ENCODE measurements at regions of chr11 and their contacts with region 1.

Region 1: DNA sequence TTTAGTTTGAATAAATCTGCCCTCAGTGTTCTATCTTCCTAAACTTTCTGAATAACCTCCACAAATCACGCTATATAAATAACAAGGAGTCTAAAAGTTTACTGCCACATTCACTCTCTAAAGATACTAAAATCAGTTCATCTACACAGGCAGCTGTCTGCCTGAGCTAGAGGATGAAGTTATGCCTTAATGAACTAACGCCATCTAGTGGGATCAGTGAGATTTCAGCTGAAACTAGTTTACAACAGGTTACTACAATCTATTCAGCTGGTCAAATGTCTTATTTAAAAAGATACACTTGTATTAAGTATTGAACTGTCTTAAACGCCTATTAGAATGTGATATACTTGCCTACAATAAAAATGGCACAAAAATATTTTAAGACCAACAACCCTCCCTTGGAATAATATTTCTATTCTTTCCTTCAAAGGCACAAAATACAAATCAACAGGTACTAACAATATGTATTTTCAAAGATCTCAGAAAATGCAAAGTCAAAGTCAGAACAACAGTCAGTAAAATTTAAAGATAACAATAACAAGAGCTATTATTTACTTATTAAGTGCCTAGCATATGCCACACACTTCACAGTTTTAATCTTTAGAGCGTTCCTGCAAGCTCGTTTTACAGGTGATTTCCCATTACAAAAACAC is 84.1 kb downstream of the LARGE2 start:
- H3K4me3 ChIP-seq: no peak overlapping the region
- H3K27ac ChIP-seq: no peak overlapping the region
- H3K4me1 ChIP-seq: no peaks in the 10 kb centered on the region
- CTCF ChIP-seq: peak; percentile 25; the same call in 1 of the 2 replicates

Region 2: DNA sequence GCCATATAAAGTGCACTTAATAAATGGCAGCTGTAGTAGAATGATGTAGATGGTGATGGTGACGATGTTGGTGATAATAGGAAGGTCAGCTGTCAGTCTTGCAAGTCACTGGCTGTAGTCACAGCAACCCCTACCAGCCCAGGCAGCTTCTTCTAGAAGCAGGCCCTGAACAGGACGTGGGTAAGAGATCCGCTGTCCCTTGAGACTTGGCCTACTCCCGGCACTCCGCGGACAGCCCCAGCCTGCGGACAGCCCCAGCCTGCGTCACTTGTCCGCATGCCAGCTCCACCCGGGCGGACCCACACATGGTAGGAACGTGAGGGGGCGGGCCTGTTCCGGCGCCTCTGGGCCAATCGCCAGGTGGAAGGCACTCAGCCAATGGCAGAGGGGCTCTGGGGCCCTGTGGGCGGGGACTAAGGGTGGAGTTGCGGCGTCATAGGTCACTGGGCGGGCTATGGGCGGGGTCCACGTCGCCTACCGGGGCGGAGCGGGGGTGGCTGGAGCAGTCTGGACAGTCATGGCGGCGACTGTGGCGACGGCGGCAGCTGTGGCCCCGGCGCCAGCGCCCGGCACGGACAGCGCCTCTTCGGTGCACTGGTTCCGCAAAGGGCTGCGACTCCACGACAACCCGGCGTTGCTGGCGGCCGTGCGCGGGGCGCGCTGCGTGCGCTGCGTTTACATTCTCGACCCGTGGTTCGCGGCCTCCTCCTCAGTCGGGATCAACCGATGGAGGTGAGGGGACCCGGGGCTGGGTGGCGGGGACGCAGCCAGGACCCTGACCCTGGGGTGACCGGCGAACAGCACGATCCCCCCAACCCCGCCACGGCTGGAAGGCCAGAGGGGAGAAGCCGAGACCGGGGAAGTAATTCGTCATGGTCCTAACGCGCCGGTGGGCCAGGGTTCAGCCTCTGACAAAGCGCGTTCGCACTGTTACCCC is 159.3 kb before region 1 on chr11 and contains the start of gene CRY2:
- CTCF ChIA-PET with region 1: interaction called, 18 read pairs
- POLR2A ChIA-PET with region 1: no interaction called
- H3K4me3 ChIP-seq: peak within 1 kb of the TSS; percentile 96
- H3K27ac ChIP-seq: no peak within 1 kb of the TSS
- H3K4me1 ChIP-seq: no peaks in the 10 kb centered on the region
- CTCF ChIP-seq: 0 out of 2 replicates have a peak, but pooled peaks have one; percentile 9

Region 3: DNA sequence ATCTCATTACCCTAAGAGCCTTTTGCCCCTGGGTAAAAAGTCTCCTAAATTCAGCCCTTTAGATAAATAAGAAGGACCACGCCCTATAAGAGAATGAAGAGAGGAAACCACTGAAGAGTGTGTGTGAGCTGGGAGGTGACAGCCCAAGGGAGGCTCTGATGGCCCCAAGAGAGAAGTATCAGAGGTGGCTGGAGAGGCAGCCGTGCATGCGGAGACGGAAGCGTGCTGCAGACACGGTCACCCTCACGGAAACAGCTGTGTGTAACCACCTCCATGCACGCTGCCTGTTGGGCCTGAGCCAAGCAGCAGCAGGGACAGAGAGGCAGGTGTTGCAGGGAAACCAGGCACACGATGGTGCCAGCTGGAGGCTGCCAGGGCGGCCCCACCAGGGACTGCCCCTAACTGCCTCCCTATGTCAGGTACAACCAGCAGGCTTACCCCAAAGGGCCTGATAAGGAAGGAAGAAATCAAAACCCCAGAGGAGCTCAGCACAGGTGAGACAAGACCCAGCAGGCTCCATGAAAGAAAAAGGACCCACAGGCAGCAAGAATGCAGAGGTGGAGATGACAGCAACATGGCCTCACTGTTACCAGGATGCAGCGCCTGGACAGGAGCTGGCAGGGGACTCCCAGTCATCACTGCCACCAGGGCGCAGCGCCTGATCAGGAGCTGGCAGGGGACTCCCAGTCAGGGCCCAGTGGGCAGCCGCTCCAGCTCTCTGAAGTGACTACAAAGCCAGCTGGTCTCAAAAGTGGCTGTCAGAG is 76.3 kb before region 1 on chr11:
- CTCF ChIA-PET with region 1: interaction called, 10 read pairs
- POLR2A ChIA-PET with region 1: no interaction called
- H3K4me3 ChIP-seq: no peak overlapping the region
- H3K27ac ChIP-seq: no peak overlapping the region
- H3K4me1 ChIP-seq: no peaks in the 10 kb centered on the region
- CTCF ChIP-seq: no peak

Region 4: DNA sequence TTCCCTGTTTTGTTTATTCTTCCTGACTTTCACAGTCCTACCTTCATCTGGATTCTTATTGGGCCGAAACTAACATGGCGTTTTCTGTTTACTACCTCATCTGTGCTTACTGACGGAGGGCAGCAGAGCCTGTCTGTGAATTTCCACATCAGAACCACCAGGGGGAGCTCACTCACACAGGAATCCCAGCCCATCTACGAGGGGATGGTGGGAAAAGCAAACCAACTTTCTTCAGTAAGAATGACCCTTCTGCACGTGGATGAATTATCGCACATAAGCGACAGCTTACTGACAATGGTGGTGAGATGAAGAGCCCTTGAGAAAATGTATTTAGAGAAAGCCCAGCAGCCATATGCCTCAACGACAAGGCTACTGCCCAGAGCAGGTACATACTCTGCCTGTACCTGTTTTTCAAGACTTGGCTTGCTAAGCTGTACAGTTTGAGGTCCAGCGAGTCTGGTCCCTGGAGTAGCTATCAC is 41.6 kb before region 1 on chr11:
- CTCF ChIA-PET with region 1: interaction called, 85 read pairs
- POLR2A ChIA-PET with region 1: interaction called, 8 read pairs
- H3K4me3 ChIP-seq: no peak overlapping the region
- H3K27ac ChIP-seq: no peak overlapping the region
- H3K4me1 ChIP-seq: no peaks in the 10 kb centered on the region
- CTCF ChIP-seq: peak; percentile 67

Region 5: DNA sequence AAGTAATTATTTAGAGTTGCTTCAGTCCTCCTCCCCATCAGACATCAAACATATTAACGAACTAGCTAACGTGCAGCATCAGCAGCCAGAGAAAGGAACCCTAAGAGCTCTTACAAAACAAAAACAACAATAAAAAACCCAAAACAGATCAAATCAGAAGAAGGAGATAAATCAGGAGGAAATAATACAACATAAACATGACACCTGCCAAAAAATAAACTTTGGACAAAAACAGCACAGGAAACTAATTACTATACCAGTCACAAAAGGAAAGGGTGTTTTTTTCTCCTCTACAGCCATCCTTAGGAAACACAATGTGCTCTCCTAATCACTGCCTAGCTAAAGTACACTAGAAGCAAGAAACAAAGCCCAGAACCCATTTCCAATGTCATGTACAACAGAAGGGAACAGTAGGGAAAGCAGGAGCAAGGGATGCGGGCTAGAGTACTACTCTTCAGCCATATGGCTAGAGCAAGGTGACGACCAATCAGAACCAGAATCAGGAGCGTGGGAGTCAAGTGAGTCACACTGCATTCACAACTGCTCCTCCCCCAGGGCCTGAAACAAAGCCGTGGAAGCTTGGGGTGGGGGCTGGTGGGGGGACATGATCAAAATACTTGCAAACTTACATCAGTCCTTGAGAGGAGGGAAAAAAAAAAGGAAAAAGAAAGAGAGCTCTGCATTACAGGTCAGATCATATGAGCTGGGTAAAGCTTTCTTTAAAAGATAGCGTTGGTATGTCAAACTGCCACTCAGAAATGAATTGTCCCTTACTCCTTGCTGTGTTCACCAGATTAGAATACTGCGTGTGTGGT is 23.7 kb before region 1 on chr11:
- CTCF ChIA-PET with region 1: interaction called, 14 read pairs
- POLR2A ChIA-PET with region 1: no interaction called
- H3K4me3 ChIP-seq: no peak overlapping the region
- H3K27ac ChIP-seq: no peak overlapping the region
- H3K4me1 ChIP-seq: peaks cover 5% of the 10 kb centered on the region
- CTCF ChIP-seq: no peak

Region 6: GRCh38 chr11:45993531-45994001 is 13.0 kb before region 1 on chr11:
- CTCF ChIA-PET with region 1: interaction called, 15 read pairs
- POLR2A ChIA-PET with region 1: no interaction called
- H3K4me3 ChIP-seq: no peak overlapping the region
- H3K27ac ChIP-seq: no peak overlapping the region
- H3K4me1 ChIP-seq: no peaks in the 10 kb centered on the region
- CTCF ChIP-seq: no peak

Region 7: DNA sequence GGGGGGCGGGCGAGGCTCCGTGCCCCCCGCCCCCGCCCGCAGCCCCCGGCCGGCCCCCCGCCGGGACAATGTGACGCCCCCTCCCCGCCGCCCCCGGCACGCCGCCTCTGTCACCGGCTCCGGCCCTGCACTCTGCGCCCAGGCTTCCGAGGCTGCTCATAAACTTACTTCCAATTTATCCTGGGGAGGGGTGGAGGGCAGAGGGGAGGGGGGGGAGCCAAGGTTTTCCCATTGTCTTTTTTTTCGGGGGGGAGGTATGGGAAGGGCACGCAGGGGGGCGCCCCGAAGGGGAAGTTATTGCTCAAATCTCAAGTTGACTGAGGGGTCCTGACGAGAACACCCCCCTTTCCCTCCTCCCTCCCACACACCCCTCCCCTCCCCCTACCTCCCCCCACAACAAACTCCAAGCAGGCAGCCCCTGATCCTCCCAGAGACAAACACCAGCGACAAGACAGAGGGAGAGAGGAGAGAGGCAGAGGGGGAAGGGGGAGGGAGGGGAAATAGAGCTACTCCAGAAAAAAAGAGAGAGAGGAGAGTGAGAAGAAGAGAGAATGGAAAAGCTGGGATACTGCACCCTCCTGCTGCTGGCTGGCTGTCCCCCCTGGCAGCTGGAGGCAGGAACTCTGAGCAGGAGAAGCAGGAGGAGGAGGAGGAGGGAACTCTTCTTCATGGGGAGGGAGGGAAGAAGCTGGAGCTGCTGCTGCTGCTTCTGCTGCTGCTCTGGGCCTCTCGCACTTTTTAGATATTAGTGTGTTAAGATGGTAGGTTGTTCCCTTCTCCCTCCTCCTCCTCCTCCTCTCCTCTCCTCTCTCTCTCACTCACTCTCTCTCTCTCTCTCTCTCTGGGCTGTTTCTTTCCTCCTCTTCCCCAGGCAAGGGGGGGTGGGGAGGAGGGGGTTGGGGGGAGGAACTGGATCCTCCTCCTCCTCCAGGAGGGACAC is 114.1 kb after region 1 on chr11:
- CTCF ChIA-PET with region 1: interaction called, 3 read pairs
- POLR2A ChIA-PET with region 1: interaction called, 12 read pairs
- H3K4me3 ChIP-seq: peak overlapping the region; percentile 84
- H3K27ac ChIP-seq: peak overlapping the region; percentile 86
- H3K4me1 ChIP-seq: peaks cover 2% of the 10 kb centered on the region; the same call in 1 of the 2 replicates
- CTCF ChIP-seq: no peak